GM23248 (cell line): ENCODE measurements at regions of chr1 and their contacts with region 1.

Region 1: GRCh38 chr1:89762779-89763648 is 57.8 kb upstream of the LRRC8D start:
- DNase-seq: peak; percentile 95
- H3K4me3 ChIP-seq: peak overlapping the region; percentile 74
- H3K27ac ChIP-seq: no peak overlapping the region
- H3K4me1 ChIP-seq: peaks cover 15% of the 10 kb centered on the region
- H3K27me3 ChIP-seq: no peaks in the 10 kb centered on the region

Region 2: DNA sequence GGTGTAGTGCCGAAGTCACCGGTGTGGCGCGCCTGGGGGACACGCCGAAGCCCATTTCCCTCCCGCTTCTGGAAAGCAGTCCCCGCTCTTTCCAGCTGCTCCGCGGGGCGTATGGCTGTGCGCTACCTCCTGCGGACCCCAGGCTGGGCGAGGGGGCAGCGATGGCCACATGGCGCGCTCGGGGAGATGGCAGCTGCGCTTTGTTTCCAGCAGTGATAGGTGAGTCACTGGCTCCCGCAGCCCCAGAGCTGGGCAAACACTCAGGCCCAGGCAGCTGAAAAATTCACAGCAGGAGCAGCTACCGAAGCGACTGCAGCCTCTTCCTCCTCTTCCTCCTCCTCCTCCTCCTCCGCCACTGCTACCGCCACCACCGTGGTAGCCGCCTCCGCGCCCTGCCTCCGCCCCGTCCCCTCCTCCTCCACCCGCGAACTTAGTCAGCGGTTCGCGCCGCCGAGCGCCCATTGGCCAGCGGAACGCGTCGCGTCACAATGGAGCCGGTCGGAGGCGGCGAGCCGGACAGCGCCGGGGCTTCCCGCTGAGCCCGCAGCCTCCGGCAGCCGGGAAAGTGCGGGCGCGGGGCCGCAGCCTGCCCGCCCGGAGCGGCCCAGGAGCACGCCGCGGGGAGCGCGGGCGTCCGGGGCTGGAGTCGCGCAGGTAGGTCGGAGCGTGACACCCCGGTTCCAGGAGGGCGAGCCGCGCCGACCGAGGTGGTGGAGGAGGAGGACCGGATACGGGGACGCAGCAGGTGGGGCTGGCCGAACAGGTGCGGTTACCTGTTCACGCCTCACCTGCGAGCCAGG is 238.4 kb before region 1 on chr1 and contains the start of gene LRRC8B:
- in situ Hi-C with region 1: loop called (anchors 25 kb)
- DNase-seq: peak; percentile 93
- H3K4me3 ChIP-seq: peak within 1 kb of the TSS; percentile 78
- H3K27ac ChIP-seq: no peak within 1 kb of the TSS
- H3K4me1 ChIP-seq: no peaks in the 10 kb centered on the region
- H3K27me3 ChIP-seq: no peaks in the 10 kb centered on the region
- total RNA-seq, gene LRRC8B: 0.32 and 0.63 TPM in 2 replicates